ENCODE measurements at regions of chr16 and their contacts with region 1.

Region 1: GRCh38 chr16:23556881-23557778 is at the starts of genes EARS2 and UBFD1:
- DNase-seq: peak; percentile 87 to 97 (median 93)
- ATAC-seq: peak; percentile 90 to 92 (median 92)
- H3K4me3 ChIP-seq: peak within 1 kb of the TSS; percentile 78 to 98
- H3K4me3 Mint-ChIP-seq: peak within 1 kb of the TSS; percentile 91 to 98 (median 92)
- H3K27ac ChIP-seq: peak within 1 kb of the TSS; percentile 82
- H3K27ac Mint-ChIP-seq: peak within 1 kb of the TSS; percentile 89 to 90
- H3K4me1 ChIP-seq: peaks cover 9 to 25% of the 10 kb centered on the region in 2 experiments
- H3K4me1 Mint-ChIP-seq: peaks cover 34 to 39% (median 37%) of the 10 kb centered on the region in 3 donors
- H3K27me3 ChIP-seq: no peaks in the 10 kb centered on the region
- H3K27me3 Mint-ChIP-seq: no peaks in the 10 kb centered on the region
- total RNA-seq, gene EARS2: 10.8 to 19.4 (median 15.9) TPM
- total RNA-seq, gene UBFD1: 43.6 to 49.1 (median 46.3) TPM

Region 2: GRCh38 chr16:23595951-23596720 is 39.0 kb after region 1 on chr16 and contains the start of gene NDUFAB1:
- CTCF ChIA-PET with region 1: interaction called, 3 to 16 read pairs
- POLR2A ChIA-PET with region 1: interaction called in 1 of 2 experiments, 3 read pairs
- DNase-seq: peak; percentile 78 to 94 (median 87)
- ATAC-seq: peak; percentile 98 to 100 (median 100)
- H3K4me3 ChIP-seq: peak within 1 kb of the TSS; percentile 75 to 89
- H3K4me3 Mint-ChIP-seq: peak within 1 kb of the TSS; percentile 75 to 84 (median 84)
- H3K27ac ChIP-seq: peak within 1 kb of the TSS; percentile 52
- H3K27ac Mint-ChIP-seq: peak within 1 kb of the TSS; percentile 55 to 82
- H3K4me1 ChIP-seq: peaks cover 8 to 27% of the 10 kb centered on the region in 2 experiments
- H3K4me1 Mint-ChIP-seq: peaks cover 35 to 41% (median 39%) of the 10 kb centered on the region in 3 donors
- H3K27me3 ChIP-seq: no peaks in the 10 kb centered on the region
- H3K27me3 Mint-ChIP-seq: no peaks in the 10 kb centered on the region
- total RNA-seq, gene NDUFAB1: 24.2 to 44.3 (median 41.0) TPM

Measured in T-cell (primary cell).